Calu3 (cell line): ENCODE measurements at regions of chr3 and their contacts with region 1.

Region 1: GRCh38 chr3:167350245-167350862 is 29.7 kb downstream of the ZBBX start:
- DNase-seq: peak; percentile 48
- H3K4me3 Mint-ChIP-seq: no peak overlapping the region
- H3K27ac Mint-ChIP-seq: no peak overlapping the region
- H3K4me1 Mint-ChIP-seq: peaks cover 15% of the 10 kb centered on the region
- H3K27me3 Mint-ChIP-seq: no peaks in the 10 kb centered on the region
- CTCF ChIP-seq: peak; percentile 79

Region 2: DNA sequence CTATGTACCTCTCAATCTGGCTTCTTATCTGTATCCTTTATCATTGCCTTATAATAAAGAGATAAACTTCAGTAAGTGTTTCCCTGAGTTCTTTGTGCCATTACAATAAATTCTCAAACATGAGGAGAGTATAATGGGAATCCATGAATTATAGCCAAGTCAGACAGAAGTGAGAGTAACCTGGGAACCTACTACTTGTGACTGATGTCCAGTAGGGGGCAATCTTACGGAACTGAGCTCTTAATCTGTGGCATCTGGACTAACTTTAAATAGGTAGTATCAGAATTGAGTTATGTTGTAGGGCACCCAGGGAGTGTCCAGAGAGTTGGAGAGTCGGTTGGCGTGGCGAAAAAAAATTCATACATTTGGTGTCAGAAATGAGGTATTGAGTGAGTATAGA is 512.8 kb before region 1 on chr3:
- CTCF ChIA-PET with region 1: no interaction called
- intact Hi-C with region 1: loop called (anchors 10 kb)
- DNase-seq: peak; percentile 19
- H3K4me3 Mint-ChIP-seq: no peak overlapping the region
- H3K27ac Mint-ChIP-seq: no peak overlapping the region
- H3K4me1 Mint-ChIP-seq: peaks cover 8% of the 10 kb centered on the region
- H3K27me3 Mint-ChIP-seq: no peaks in the 10 kb centered on the region
- CTCF ChIP-seq: peak; percentile 43

Region 3: GRCh38 chr3:167102071-167102470 is 248.3 kb before region 1 on chr3:
- CTCF ChIA-PET with region 1: no interaction called
- intact Hi-C with region 1: loop called (anchors 2 kb)
- DNase-seq: peak; percentile 27
- H3K4me3 Mint-ChIP-seq: no peak overlapping the region
- H3K27ac Mint-ChIP-seq: no peak overlapping the region
- H3K4me1 Mint-ChIP-seq: no peaks in the 10 kb centered on the region
- H3K27me3 Mint-ChIP-seq: no peaks in the 10 kb centered on the region
- CTCF ChIP-seq: no peak

Region 4: DNA sequence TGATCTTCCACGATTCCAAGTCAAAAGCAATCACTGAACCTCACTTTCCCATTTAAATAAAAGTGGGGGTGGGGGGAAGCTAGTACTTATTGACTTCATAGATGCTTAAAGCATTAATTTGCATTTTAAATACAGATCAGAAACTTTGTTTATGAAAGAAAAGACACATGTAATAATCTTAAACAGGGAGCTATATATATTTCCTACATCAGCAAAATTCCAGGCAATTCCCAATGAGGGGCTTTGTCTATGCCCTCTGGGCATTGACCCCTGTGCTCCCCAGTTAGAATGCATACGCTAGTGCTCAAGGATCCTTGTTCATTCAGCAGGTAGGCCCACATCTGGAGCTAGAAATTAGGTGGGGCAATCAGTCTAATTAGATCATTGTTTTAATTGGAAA is 103.5 kb after region 1 on chr3:
- CTCF ChIA-PET with region 1: no interaction called
- intact Hi-C with region 1: no loop called
- DNase-seq: no peak
- H3K4me3 Mint-ChIP-seq: no peak overlapping the region
- H3K27ac Mint-ChIP-seq: no peak overlapping the region
- H3K4me1 Mint-ChIP-seq: no peaks in the 10 kb centered on the region
- H3K27me3 Mint-ChIP-seq: no peaks in the 10 kb centered on the region
- CTCF ChIP-seq: no peak